Activated T-helper 2 cell treated with anti-CD3 and anti-CD28 coated beads, Interferon-gamma antibody, Interleukin-2, Interleukin-4, amounts not matched to agents 10 μg/mL and 5 μg/mL and 100 μg/mL, durations not matched to agents 14 hours and 24 hours and 36 hours (primary cell): ENCODE measurements at regions of chr3 and their contacts with region 1.

Region 1: GRCh38 chr3:157088601-157089454 is 71.1 kb downstream of the CCNL1 start:
- DNase-seq: peak; percentile 93
- H3K4me3 Mint-ChIP-seq: peak overlapping the region; percentile 76
- H3K27ac Mint-ChIP-seq: peak overlapping the region; percentile 98
- H3K4me1 Mint-ChIP-seq: peaks cover 74% of the 10 kb centered on the region
- H3K27me3 Mint-ChIP-seq: no peaks in the 10 kb centered on the region

Region 2: GRCh38 chr3:156483961-156484787 is 604.7 kb before region 1 on chr3:
- intact Hi-C with region 1: loop called (anchors 2 kb)
- DNase-seq: peak; percentile 49
- H3K4me3 Mint-ChIP-seq: peak overlapping the region; percentile 62
- H3K27ac Mint-ChIP-seq: peak overlapping the region; percentile 86
- H3K4me1 Mint-ChIP-seq: peaks cover 24% of the 10 kb centered on the region
- H3K27me3 Mint-ChIP-seq: peaks cover 24% of the 10 kb centered on the region

Region 3: DNA sequence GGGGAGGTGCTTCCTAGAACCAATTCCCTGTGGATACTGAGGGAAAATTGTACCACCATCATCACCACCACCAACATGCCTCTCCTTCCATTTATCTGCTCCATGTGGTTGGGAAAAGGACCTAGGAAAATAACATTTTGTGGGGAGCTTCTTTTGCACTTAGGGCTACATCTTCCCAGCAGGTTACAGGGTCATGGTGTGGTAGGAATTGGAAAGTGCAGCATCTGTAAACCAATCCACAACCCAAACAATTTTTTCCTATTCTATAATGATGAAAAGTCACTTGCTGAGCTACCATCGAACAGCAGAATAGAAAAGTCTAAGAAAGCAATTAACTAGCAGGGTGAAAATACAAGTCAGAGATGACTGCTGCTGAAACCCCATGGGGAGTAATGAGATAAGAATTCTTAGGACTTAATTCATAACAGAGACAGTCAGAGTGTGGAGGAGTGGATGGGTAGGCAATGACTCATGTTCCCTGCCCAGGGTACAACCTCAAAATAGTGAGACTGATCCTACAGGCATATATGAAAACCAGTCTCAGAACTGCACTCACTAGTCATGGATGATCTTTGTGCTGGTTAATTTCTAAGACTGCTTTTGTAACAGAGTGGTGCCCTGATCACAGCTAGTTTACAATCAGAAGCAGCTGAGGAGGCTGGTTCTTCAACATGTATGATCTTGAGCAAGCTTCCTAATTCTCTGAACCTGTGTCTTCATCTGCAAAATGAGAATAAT is 300.7 kb before region 1 on chr3:
- intact Hi-C with region 1: loop called (anchors 1 kb)
- DNase-seq: no peak
- H3K4me3 Mint-ChIP-seq: no peak overlapping the region
- H3K27ac Mint-ChIP-seq: peak overlapping the region; percentile 40
- H3K4me1 Mint-ChIP-seq: peaks cover 55% of the 10 kb centered on the region
- H3K27me3 Mint-ChIP-seq: no peaks in the 10 kb centered on the region

Region 4: GRCh38 chr3:157103280-157103679 is 14.5 kb after region 1 on chr3:
- intact Hi-C with region 1: loop called (anchors 1 kb)
- DNase-seq: no peak
- H3K4me3 Mint-ChIP-seq: no peak overlapping the region
- H3K27ac Mint-ChIP-seq: peak overlapping the region; percentile 76
- H3K4me1 Mint-ChIP-seq: peaks cover 44% of the 10 kb centered on the region
- H3K27me3 Mint-ChIP-seq: no peaks in the 10 kb centered on the region

Region 5: DNA sequence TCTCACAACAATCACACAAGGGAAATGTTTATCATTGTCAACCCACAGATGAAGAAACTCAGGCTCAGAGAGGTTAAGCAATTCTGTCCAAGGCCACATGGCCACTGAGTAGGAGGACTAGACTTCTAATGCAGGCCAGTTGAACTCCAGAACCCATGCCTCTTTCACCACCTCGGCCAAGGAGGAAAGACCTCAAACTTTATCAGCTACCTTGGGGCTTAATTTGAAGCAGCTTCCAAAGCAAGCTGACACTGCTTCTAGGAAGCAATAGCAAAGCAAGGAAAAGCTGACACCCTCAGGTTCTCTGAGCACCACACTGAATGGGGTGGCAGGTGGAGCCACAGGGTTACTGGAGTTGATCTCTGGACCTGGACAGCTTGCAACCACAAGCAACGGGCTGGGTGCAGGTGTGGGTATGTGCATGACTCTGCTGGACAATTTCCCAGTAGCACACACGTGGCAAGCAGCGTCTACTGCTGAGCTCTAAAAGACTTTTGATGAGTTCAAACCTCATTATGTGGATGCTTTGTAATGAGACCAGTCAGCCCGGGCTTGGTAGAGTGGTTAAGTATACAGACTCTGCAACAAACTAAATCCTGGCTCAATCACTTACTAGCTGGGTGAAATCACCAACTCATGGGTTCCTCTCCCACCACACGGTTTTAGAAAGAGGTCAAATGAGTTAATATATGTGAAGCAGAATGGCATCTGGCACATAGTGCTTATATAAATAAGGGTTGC is 48.0 kb after region 1 on chr3:
- intact Hi-C with region 1: no loop called
- DNase-seq: no peak
- H3K4me3 Mint-ChIP-seq: no peak overlapping the region
- H3K27ac Mint-ChIP-seq: peak overlapping the region; percentile 24
- H3K4me1 Mint-ChIP-seq: peaks cover 54% of the 10 kb centered on the region
- H3K27me3 Mint-ChIP-seq: no peaks in the 10 kb centered on the region

Region 6: DNA sequence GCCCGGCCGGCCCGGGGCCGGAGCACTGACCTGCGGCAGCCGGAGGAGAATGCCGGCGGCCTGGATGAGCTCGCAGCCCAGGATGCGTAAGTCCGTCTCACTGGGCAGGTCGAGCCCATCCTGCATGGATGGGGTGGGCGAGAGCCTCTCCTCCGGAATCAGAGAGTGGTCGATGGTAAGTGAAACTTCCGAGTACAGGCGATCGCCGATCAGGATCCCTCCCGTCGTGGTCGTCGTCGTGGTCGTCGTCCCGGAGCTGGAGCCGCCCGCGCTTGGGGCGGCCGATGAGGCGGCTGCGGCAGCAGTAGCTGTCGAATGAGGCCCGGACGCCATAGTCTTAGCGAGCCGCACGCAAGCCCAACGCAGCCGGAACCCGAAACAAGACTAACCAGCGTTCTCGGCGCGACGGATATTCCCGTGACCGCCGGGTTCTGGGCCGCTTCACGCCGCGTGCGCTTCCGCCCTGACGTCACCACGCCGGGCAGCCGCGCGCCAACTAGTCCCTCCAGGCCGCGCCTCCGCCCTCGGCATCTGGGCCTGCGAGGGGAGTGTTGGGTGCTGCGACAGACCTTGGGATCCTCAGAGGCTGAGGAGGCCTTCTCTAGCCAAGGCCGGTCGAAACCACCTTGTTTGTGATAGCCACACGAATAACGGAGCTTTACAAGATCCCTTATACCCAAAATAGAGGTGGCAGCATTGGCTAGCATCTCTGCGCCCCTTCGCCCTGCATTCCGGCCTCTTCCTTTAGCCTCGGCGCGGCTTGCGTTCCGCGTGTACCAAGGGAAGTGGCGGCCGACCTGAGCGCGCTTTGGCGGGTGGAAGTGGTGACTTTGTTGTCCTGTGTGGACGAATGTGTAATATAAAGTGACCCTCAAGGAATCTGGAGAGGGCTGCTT is 71.2 kb after region 1 on chr3 and contains the start of gene CCNL1:
- intact Hi-C with region 1: loop called (anchors 1 kb)
- DNase-seq: peak; percentile 95
- H3K4me3 Mint-ChIP-seq: peak within 1 kb of the TSS; percentile 99
- H3K27ac Mint-ChIP-seq: peak within 1 kb of the TSS; percentile 98
- H3K4me1 Mint-ChIP-seq: peaks cover 52% of the 10 kb centered on the region
- H3K27me3 Mint-ChIP-seq: no peaks in the 10 kb centered on the region
- total RNA-seq, gene CCNL1: 160 and 167 TPM in 2 replicates